SK-N-SH (cell line): ENCODE measurements at regions of chr2 and their contacts with region 1.

Region 1: GRCh38 chr2:168346725-168347477 is 99.5 kb upstream of the STK39 start:
- DNase-seq: peak; percentile 69
- H3K4me3 ChIP-seq: peak overlapping the region; percentile 57 to 63
- H3K27ac ChIP-seq: peak overlapping the region in 1 of 2 experiments; percentile 82; a peak in 2 of 4 replicates
- H3K4me1 ChIP-seq: peaks cover 0 to 6% of the 10 kb centered on the region in 2 experiments; a peak in 2 of 4 replicates
- H3K27me3 ChIP-seq: no peaks in the 10 kb centered on the region
- CTCF ChIP-seq: peak; percentile 84
- EP300 ChIP-seq: no peak
- RAD21 ChIP-seq: peak; percentile 97

Region 2: GRCh38 chr2:167298017-167298416 is 1048.9 kb before region 1 on chr2:
- CTCF ChIA-PET with region 1: no interaction called
- POLR2A ChIA-PET with region 1: no interaction called
- DNase-seq: no peak
- H3K4me3 ChIP-seq: no peak overlapping the region
- H3K27ac ChIP-seq: no peak overlapping the region
- H3K4me1 ChIP-seq: peaks cover 0 to 14% of the 10 kb centered on the region in 2 experiments; a peak in 2 of 4 replicates
- H3K27me3 ChIP-seq: peaks cover 8% of the 10 kb centered on the region; the same call in 1 of the 2 replicates
- CTCF ChIP-seq: no peak
- EP300 ChIP-seq: no peak
- RAD21 ChIP-seq: no peak

Region 3: DNA sequence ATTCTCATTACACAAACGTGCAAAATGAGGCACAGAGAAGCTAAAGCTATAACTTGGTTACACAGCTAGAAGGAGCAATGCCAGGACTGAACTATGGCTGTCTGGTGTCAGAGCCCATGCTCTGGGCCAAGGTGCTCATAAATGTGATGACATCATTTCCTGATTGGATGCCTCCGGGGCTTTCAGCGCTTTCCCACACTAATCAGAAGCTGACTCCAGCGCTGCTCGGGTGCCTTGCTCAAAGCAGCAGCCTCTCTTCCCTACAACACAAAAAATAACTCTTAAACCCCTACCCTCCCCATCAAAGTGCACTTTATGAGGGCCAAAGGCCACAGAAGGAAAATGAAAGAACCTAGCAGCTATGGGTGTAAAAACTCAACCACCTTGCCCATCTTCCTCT is 190.2 kb before region 1 on chr2:
- CTCF ChIA-PET with region 1: no interaction called
- POLR2A ChIA-PET with region 1: no interaction called
- DNase-seq: peak; percentile 49
- H3K4me3 ChIP-seq: no peak overlapping the region
- H3K27ac ChIP-seq: peak overlapping the region; percentile 14 to 72
- H3K4me1 ChIP-seq: peaks cover 19 to 24% of the 10 kb centered on the region in 2 experiments
- H3K27me3 ChIP-seq: no peaks in the 10 kb centered on the region
- CTCF ChIP-seq: no peak
- EP300 ChIP-seq: peak in 1 of 2 experiments; percentile 62; a peak in 1 of 4 replicates
- RAD21 ChIP-seq: peak; percentile 15; the same call in 1 of the 2 replicates

Region 4: GRCh38 chr2:168224346-168224745 is 122.6 kb before region 1 on chr2:
- CTCF ChIA-PET with region 1: no interaction called
- POLR2A ChIA-PET with region 1: no interaction called
- DNase-seq: no peak
- H3K4me3 ChIP-seq: no peak overlapping the region
- H3K27ac ChIP-seq: no peak overlapping the region
- H3K4me1 ChIP-seq: peaks cover 0 to 6% of the 10 kb centered on the region in 2 experiments; a peak in 3 of 4 replicates
- H3K27me3 ChIP-seq: no peaks in the 10 kb centered on the region
- CTCF ChIP-seq: no peak
- EP300 ChIP-seq: no peak
- RAD21 ChIP-seq: no peak

Region 5: DNA sequence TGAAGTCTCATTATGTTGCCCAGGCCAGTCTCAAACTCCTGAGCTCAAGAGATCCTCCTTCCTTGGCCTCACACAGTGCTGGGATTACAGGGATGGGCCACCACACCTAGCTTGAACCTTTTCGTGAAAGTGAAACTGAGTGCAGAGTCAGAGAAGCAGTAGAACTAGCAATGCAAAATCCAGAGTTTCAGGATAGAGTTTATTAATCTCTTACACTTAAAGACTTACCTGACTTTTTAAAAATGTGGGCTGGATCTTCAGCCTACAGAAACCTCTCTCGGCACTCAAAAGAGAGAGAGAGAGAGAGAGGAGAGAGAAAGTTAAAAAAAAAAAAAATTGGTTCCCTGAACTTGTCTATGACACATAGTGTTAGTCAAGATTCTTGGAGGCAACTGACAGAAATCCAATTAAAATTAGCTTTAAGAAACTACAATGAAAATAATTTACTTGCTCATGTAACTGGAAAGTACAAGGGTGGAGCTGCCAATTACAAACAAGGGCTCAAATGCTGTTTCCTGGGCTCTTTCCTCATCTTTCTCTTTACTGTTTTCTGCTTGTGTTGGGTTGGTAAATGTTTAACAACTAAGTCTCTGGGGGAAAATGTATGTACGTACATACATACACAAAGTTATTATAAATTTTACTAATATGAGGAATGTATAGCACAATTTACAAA is 11.0 kb after region 1 on chr2:
- CTCF ChIA-PET with region 1: interaction called, 18 read pairs
- POLR2A ChIA-PET with region 1: no interaction called
- DNase-seq: no peak
- H3K4me3 ChIP-seq: no peak overlapping the region
- H3K27ac ChIP-seq: no peak overlapping the region
- H3K4me1 ChIP-seq: peaks cover 0 to 2% of the 10 kb centered on the region in 2 experiments; a peak in 1 of 4 replicates
- H3K27me3 ChIP-seq: no peaks in the 10 kb centered on the region
- CTCF ChIP-seq: no peak
- EP300 ChIP-seq: no peak
- RAD21 ChIP-seq: no peak

Region 6: DNA sequence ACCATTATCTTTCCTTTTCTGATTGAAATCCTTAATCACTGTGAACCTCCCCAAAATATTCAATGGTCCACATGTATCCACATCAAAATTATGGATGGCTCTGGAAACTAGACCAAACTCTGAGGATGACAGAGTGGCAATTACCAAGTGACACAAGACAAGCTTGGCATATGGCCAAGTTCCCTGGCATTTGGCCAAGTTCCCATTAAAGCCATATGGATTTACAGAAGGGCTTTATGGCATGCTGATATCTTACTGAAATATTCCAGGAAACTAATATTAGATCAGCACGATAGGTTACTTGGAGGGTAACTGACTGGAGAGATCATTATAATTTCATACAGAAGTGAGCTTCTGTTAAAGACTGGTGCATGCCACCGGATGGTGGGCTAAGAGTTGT is 87.2 kb after region 1 on chr2:
- CTCF ChIA-PET with region 1: interaction called, 17 read pairs
- POLR2A ChIA-PET with region 1: no interaction called
- DNase-seq: peak; percentile 52
- H3K4me3 ChIP-seq: no peak overlapping the region
- H3K27ac ChIP-seq: peak overlapping the region in 1 of 2 experiments; percentile 94; a peak in 2 of 4 replicates
- H3K4me1 ChIP-seq: peaks cover 0 to 53% of the 10 kb centered on the region in 2 experiments; a peak in 2 of 4 replicates
- H3K27me3 ChIP-seq: no peaks in the 10 kb centered on the region
- CTCF ChIP-seq: no peak
- EP300 ChIP-seq: peak in 1 of 2 experiments; percentile 97; a peak in 2 of 4 replicates
- RAD21 ChIP-seq: peak; percentile 29; the same call in 1 of the 2 replicates

Region 7: GRCh38 chr2:168534926-168535325 is 188.0 kb after region 1 on chr2:
- CTCF ChIA-PET with region 1: no interaction called
- POLR2A ChIA-PET with region 1: no interaction called
- DNase-seq: no peak
- H3K4me3 ChIP-seq: no peak overlapping the region
- H3K27ac ChIP-seq: no peak overlapping the region
- H3K4me1 ChIP-seq: peaks cover 0 to 3% of the 10 kb centered on the region in 2 experiments; a peak in 2 of 4 replicates
- H3K27me3 ChIP-seq: no peaks in the 10 kb centered on the region
- CTCF ChIP-seq: no peak
- EP300 ChIP-seq: no peak
- RAD21 ChIP-seq: no peak

Region 8: DNA sequence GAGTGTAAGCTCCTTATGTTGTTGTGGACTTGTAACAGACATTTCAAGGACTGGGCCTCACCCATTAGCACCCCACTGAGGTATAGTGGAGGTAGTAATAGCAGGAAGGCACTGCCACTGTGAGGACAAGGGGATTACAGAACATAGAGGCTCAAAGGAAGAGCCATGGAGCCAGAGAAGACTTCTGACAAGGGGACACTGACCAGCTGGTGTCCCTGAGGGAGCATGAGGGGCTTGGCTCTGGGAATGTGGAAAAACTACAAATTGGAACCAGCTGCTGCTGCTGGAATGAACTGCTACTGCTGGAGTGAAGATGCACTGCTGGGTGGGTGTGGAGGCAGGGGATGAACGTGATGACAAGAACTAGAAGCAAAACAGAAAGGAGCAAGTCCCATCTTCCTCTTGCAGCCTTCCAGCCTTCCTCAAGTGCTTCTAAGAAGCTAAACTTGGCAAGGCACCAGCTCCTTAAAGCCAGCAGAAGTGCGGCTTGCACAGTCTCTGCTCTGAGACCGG is 288.2 kb after region 1 on chr2:
- CTCF ChIA-PET with region 1: interaction called, 10 read pairs
- POLR2A ChIA-PET with region 1: no interaction called
- DNase-seq: peak; percentile 68
- H3K4me3 ChIP-seq: no peak overlapping the region
- H3K27ac ChIP-seq: peak overlapping the region in 1 of 2 experiments; percentile 64; a peak in 2 of 4 replicates
- H3K4me1 ChIP-seq: peaks cover 0 to 37% of the 10 kb centered on the region in 2 experiments; a peak in 2 of 4 replicates
- H3K27me3 ChIP-seq: no peaks in the 10 kb centered on the region
- CTCF ChIP-seq: no peak
- EP300 ChIP-seq: peak in 1 of 2 experiments; percentile 89; a peak in 2 of 4 replicates
- RAD21 ChIP-seq: peak; percentile 48

Region 9: DNA sequence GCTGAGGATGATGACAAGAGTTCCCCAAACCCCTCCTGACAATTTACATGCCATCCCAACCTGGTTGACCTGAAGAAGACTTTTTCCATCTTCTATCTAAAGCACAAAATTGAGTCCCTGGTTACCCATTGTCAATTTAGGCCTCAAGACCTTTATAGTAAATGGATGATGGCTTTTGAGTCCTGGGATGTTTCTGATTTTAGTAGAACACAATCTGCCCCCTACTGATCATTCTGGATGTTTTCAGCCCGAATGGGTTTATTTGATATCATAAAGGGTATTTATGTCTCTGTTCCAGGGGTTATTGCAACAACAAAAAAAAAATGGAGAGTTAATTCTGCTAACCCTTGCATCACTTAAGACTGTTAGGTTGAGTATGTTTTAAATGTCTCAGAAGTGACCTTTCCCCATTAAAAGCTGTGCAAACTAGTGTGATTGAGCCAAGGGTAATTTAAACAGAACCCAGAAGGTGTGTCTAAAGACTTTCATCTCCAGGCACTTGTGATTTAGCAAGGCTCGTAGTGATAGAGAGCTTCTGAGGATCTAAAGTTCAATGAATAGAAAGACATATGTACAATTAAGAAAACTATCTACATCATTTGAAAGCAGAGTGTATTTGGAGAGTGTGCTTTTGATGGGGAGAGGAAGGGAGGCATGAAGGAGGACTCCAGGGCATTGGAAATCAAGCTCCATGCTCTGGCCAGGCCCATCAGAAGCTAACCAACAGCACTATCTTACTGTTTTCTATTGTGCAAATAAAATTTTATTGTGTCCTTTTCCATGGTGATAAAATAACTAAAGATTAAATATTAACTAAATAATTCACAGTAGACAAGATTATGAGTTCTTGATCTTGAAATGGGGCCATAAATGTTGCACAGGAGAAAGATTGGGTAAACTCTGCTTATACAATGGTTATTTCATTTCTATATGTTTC is 358.9 kb after region 1 on chr2:
- CTCF ChIA-PET with region 1: interaction called, 11 read pairs
- POLR2A ChIA-PET with region 1: no interaction called
- DNase-seq: no peak
- H3K4me3 ChIP-seq: no peak overlapping the region
- H3K27ac ChIP-seq: no peak overlapping the region
- H3K4me1 ChIP-seq: peaks cover 0 to 2% of the 10 kb centered on the region in 2 experiments; a peak in 2 of 4 replicates
- H3K27me3 ChIP-seq: no peaks in the 10 kb centered on the region
- CTCF ChIP-seq: peak; percentile 53
- EP300 ChIP-seq: no peak
- RAD21 ChIP-seq: peak; percentile 67

Region 10: GRCh38 chr2:168912901-168913369 is 566.0 kb after region 1 on chr2:
- CTCF ChIA-PET with region 1: interaction called, 10 read pairs
- POLR2A ChIA-PET with region 1: no interaction called
- DNase-seq: peak; percentile 79
- H3K4me3 ChIP-seq: peak overlapping the region; percentile 41 to 69
- H3K27ac ChIP-seq: peak overlapping the region in 1 of 2 experiments; percentile 58; a peak in 1 of 4 replicates
- H3K4me1 ChIP-seq: peaks cover 0 to 4% of the 10 kb centered on the region in 2 experiments; a peak in 2 of 4 replicates
- H3K27me3 ChIP-seq: peaks cover 6% of the 10 kb centered on the region
- CTCF ChIP-seq: no peak
- EP300 ChIP-seq: no peak
- RAD21 ChIP-seq: no peak